Natural killer cell (primary cell): ENCODE measurements at regions of chr7 and their contacts with region 1.

Region 1: DNA sequence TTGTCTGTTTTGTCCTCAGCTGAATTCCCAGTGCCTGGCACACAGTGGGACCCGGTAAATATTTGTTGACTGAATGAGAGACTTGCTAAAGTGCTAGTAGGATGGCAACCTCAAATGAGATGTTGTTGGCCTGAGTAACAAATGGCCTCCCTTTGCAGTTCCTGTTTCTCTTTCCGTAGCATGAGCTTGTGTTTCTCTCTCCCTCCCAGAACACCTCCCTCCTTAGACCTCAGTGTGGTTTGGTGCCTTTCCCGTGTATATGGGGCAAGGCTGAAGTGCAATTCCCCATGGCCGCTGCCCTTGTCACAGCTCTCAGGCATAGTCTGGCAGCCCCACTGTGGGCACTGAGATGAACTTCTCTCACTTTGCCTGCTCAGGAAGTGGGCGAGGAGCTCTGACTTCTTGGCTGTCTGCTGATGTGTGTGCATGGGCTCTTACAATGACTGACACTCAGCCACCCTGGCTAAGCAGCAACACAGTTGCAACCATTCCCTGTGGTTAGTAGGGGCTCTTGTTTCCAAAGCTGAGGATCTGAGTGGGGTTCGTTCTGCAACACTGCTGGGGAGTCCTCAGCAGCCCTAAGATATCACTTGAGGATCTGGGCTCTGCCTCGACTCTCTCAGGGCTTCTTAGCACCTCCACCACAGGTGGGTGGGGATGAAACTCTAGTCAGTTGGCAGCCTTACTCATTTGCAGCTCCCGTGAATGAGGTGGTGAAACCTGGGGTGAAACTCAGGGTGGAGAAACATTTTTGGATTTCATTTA is 136.1 kb downstream of the ICA1 start:
- DNase-seq: peak; percentile 73 to 93
- ATAC-seq: peak; percentile 79 to 92 (median 87)
- H3K4me3 ChIP-seq: no peak overlapping the region
- H3K4me3 Mint-ChIP-seq: peak overlapping the region; percentile 81
- H3K27ac ChIP-seq: peak overlapping the region; percentile 79
- H3K27ac Mint-ChIP-seq: peak overlapping the region; percentile 88 to 97
- H3K4me1 ChIP-seq: peaks cover 64% of the 10 kb centered on the region
- H3K4me1 Mint-ChIP-seq: peaks cover 84 to 90% of the 10 kb centered on the region in 2 donors
- H3K27me3 ChIP-seq: no peaks in the 10 kb centered on the region
- H3K27me3 Mint-ChIP-seq: no peaks in the 10 kb centered on the region
- CTCF ChIP-seq: no peak

Region 2: DNA sequence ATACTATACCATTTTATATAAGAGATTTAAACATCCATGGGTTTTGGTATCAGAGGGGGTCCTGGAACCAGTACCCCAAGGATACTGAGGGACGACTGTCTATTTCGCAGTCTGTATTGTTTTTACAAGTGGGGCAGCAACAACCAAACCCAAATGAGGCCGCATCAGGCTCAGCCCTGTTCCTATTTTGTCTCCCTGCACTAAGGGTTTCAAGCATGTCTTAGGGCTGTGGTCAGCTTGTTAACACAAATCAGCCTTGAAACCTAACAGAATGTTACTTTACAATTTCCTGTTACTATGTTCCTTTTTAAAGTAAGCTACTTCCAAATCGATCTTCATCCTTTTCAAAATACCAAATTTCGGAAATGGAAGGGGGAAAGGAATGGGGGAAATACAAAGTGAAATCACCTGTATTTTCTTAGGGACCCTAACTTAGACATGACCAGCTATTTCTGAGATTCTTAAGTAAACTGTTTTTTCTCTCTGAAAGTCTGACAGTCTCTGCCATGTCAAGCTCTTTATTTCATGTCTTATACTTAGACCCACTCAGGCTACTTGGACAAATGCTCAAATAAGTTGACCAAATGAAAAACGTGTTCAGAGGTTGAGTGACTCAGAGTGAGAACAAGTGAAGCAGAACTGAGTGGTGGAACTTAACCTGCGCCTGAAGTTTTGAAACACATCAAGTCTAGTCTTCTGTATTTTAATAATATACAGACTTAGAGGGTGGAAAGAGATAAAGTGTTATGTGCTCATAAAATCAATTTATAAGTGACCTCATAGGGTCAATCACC is 867.8 kb before region 1 on chr7:
- intact Hi-C with region 1: loop called (anchors 5 kb)
- DNase-seq: peak; percentile 24 to 56
- ATAC-seq: peak; percentile 73 to 86 (median 84)
- H3K4me3 ChIP-seq: peak overlapping the region; percentile 39
- H3K4me3 Mint-ChIP-seq: peak overlapping the region; percentile 84
- H3K27ac ChIP-seq: peak overlapping the region; percentile 89
- H3K27ac Mint-ChIP-seq: peak overlapping the region; percentile 90 to 94
- H3K4me1 ChIP-seq: peaks cover 36% of the 10 kb centered on the region
- H3K4me1 Mint-ChIP-seq: peaks cover 51 to 66% of the 10 kb centered on the region in 2 donors
- H3K27me3 ChIP-seq: no peaks in the 10 kb centered on the region
- H3K27me3 Mint-ChIP-seq: no peaks in the 10 kb centered on the region
- CTCF ChIP-seq: no peak

Region 3: GRCh38 chr7:7681179-7681935 is 444.5 kb before region 1 on chr7:
- intact Hi-C with region 1: loop called (anchors 10 kb)
- DNase-seq: peak in 1 of 2 donors; percentile 79
- ATAC-seq: peak; percentile 66 to 87 (median 77)
- H3K4me3 ChIP-seq: no peak overlapping the region
- H3K4me3 Mint-ChIP-seq: no peak overlapping the region
- H3K27ac ChIP-seq: peak overlapping the region; percentile 42
- H3K27ac Mint-ChIP-seq: peak overlapping the region; percentile 59 to 62
- H3K4me1 ChIP-seq: no peaks in the 10 kb centered on the region
- H3K4me1 Mint-ChIP-seq: peaks cover 25 to 29% of the 10 kb centered on the region in 2 donors
- H3K27me3 ChIP-seq: no peaks in the 10 kb centered on the region
- H3K27me3 Mint-ChIP-seq: no peaks in the 10 kb centered on the region
- CTCF ChIP-seq: peak; percentile 77

Region 4: GRCh38 chr7:7848246-7848645 is 277.6 kb before region 1 on chr7:
- intact Hi-C with region 1: loop called (anchors 2 kb)
- DNase-seq: peak in 1 of 2 donors; percentile 24
- ATAC-seq: peak; percentile 72 to 93 (median 79)
- H3K4me3 ChIP-seq: no peak overlapping the region
- H3K4me3 Mint-ChIP-seq: peak overlapping the region; percentile 82
- H3K27ac ChIP-seq: peak overlapping the region; percentile 44
- H3K27ac Mint-ChIP-seq: peak overlapping the region; percentile 83
- H3K4me1 ChIP-seq: peaks cover 12% of the 10 kb centered on the region
- H3K4me1 Mint-ChIP-seq: peaks cover 46 to 48% of the 10 kb centered on the region in 2 donors
- H3K27me3 ChIP-seq: no peaks in the 10 kb centered on the region
- H3K27me3 Mint-ChIP-seq: no peaks in the 10 kb centered on the region
- CTCF ChIP-seq: no peak

Region 5: DNA sequence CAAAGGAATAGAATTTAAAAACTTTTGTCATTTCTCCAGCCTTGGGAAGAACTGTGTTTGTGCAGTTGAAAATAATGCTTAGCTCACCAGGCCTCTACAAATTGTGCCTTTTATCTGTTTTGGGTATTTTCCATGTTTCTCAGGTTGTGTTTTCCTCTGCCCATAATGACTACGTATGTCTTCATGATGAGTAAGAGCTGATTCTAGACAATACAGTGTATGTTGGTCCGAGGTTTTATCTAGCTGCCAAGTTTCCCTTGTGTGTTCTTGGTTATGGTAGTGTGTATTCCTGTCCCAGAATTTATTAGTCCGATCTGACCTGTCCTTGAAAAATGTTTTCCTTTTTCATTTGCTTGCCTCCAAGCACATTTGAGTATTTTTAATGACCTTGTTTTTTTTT is 241.0 kb before region 1 on chr7:
- intact Hi-C with region 1: no loop called
- DNase-seq: no peak
- ATAC-seq: no peak
- H3K4me3 ChIP-seq: no peak overlapping the region
- H3K4me3 Mint-ChIP-seq: no peak overlapping the region
- H3K27ac ChIP-seq: no peak overlapping the region
- H3K27ac Mint-ChIP-seq: no peak overlapping the region
- H3K4me1 ChIP-seq: no peaks in the 10 kb centered on the region
- H3K4me1 Mint-ChIP-seq: no peaks in the 10 kb centered on the region
- H3K27me3 ChIP-seq: no peaks in the 10 kb centered on the region
- H3K27me3 Mint-ChIP-seq: no peaks in the 10 kb centered on the region
- CTCF ChIP-seq: no peak

Region 6: DNA sequence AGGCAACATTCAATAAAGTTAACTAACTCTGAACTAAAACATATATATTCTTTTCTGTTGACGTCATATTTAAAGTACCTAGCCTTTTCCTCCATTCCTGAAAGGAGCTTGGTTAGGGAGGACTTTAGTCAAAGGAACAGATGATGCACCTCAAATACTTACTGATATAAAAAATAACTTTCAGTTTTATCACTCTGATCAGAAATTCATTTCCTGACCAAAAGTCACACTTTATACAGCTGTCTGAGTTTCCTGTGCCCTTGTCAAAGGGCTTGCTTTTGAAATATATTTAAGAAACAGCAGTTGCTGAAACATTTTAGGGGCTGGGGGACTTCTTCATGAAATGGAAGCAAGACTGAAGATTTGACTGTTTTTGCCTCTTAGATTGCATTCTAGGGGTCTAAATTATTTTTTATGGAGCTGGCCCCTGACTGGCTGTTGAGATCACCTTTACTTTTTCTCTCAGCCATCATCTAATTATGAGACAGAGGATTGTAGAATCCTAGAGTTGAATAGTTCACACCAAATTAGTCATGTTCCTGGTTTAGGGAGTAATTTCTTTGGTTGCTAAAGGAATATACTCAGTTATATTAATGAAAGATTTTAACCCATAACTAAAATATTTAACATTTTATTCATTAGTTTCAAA is 110.6 kb before region 1 on chr7:
- intact Hi-C with region 1: loop called (anchors 2 kb)
- DNase-seq: peak in 1 of 2 donors; percentile 63
- ATAC-seq: peak; percentile 84 to 90 (median 86)
- H3K4me3 ChIP-seq: peak overlapping the region; percentile 18
- H3K4me3 Mint-ChIP-seq: peak overlapping the region; percentile 87
- H3K27ac ChIP-seq: peak overlapping the region; percentile 78
- H3K27ac Mint-ChIP-seq: peak overlapping the region; percentile 87 to 93
- H3K4me1 ChIP-seq: peaks cover 11% of the 10 kb centered on the region
- H3K4me1 Mint-ChIP-seq: peaks cover 50 to 61% of the 10 kb centered on the region in 2 donors
- H3K27me3 ChIP-seq: no peaks in the 10 kb centered on the region
- H3K27me3 Mint-ChIP-seq: no peaks in the 10 kb centered on the region
- CTCF ChIP-seq: no peak

Region 7: GRCh38 chr7:8176370-8177081 is 50.7 kb after region 1 on chr7:
- intact Hi-C with region 1: loop called (anchors 1 kb)
- DNase-seq: peak; percentile 32 to 88
- ATAC-seq: peak; percentile 83 to 93 (median 89)
- H3K4me3 ChIP-seq: peak overlapping the region; percentile 2
- H3K4me3 Mint-ChIP-seq: peak overlapping the region; percentile 77
- H3K27ac ChIP-seq: peak overlapping the region; percentile 87
- H3K27ac Mint-ChIP-seq: peak overlapping the region; percentile 85 to 97
- H3K4me1 ChIP-seq: peaks cover 36% of the 10 kb centered on the region
- H3K4me1 Mint-ChIP-seq: peaks cover 54 to 59% of the 10 kb centered on the region in 2 donors
- H3K27me3 ChIP-seq: no peaks in the 10 kb centered on the region
- H3K27me3 Mint-ChIP-seq: no peaks in the 10 kb centered on the region
- CTCF ChIP-seq: no peak

Region 8: DNA sequence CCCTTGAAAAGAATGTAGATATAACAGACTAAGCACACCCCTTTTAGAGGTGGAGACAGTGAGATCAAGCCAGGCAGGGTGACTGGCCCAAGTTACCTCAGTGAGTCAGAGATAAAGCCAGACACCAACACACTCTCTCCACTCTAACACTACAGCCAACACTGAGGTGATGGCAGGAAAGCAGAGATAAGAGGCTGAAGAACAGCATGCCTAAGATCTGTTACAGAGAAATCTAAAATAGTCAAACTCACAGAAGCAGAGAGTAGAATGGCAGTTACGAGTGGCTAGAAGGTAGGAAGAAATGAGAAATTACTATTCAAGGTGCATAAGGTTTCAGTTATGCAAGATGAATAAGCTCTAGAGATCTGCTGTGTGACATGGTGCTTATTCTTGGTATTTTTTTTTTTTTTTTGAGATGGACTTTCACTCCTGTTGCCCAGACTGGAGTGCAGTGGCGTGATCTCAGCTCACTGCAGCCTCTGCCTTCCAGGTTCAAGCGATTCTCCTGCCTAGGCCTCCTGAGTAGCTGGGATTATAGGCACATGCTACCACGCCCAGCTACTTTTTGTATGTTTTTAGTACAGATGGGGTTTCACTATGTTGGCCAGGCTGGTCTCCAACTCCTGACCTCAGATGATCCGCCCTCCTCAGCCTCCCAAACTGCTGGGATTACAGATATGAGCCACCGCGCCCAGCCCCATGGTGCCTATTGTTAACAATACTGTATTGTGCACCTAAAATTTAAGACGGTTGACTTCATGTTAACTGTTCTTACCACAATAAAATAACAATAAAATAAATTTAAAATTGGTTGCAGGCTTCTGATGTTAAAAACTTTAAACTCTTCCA is 107.4 kb after region 1 on chr7:
- intact Hi-C with region 1: no loop called
- DNase-seq: no peak
- ATAC-seq: no peak
- H3K4me3 ChIP-seq: no peak overlapping the region
- H3K4me3 Mint-ChIP-seq: no peak overlapping the region
- H3K27ac ChIP-seq: no peak overlapping the region
- H3K27ac Mint-ChIP-seq: no peak overlapping the region
- H3K4me1 ChIP-seq: no peaks in the 10 kb centered on the region
- H3K4me1 Mint-ChIP-seq: no peaks in the 10 kb centered on the region
- H3K27me3 ChIP-seq: no peaks in the 10 kb centered on the region
- H3K27me3 Mint-ChIP-seq: peaks cover 6 to 17% of the 10 kb centered on the region in 2 donors
- CTCF ChIP-seq: no peak